Activated CD4-positive, alpha-beta memory T cell treated with anti-CD3 and anti-CD28 coated beads for 36 hours (primary cell): ENCODE measurements at regions of chr16 and their contacts with region 1.

Region 1: GRCh38 chr16:12613131-12613991 is 190.3 kb downstream of the CPPED1 start:
- DNase-seq: peak; percentile 75
- H3K4me3 Mint-ChIP-seq: no peak overlapping the region
- H3K27ac Mint-ChIP-seq: peak overlapping the region; percentile 67
- H3K4me1 Mint-ChIP-seq: peaks cover 38% of the 10 kb centered on the region
- H3K27me3 Mint-ChIP-seq: peaks cover 13% of the 10 kb centered on the region

Region 2: DNA sequence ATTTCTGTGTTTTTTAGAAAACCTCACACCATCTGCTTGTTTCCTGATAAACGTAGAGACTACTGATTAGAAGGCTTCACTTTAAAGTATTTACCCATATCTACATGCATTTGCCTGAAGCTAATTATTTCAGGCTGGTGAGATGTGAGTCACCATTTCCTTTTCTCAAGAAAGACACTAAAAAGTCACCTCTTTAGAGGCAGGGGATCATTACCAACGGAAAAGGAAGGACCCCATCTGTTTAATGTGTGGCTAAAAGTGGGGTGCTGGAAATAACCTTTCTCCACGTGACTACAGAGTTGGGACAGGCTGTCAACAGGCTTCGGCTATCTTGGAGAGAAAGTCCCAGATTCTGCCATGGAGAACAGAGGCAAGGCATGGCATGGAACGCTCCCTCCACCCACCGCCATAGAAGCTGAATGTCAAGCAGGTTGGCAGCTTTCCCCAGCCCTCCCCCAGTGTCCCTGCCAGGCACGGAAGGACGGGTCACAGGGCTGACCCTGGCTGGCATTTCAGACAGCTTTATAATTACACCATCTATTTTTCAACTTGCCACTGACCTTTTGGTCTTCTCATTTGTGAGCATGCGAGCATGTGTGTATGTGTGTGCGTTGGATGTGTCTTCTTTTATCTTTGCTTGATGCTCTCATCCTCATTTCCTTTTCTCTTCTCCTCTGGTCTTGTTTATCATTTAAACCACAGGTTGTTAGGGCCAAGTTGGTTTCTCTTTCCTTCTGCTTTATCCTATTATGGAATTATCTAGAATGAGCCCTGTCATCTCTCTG is 33.3 kb after region 1 on chr16:
- CTCF ChIA-PET with region 1: no interaction called
- POLR2A ChIA-PET with region 1: no interaction called
- intact Hi-C with region 1: loop called (anchors 2 kb)
- DNase-seq: peak; percentile 44
- H3K4me3 Mint-ChIP-seq: peak overlapping the region; percentile 42
- H3K27ac Mint-ChIP-seq: peak overlapping the region; percentile 75
- H3K4me1 Mint-ChIP-seq: peaks cover 16% of the 10 kb centered on the region
- H3K27me3 Mint-ChIP-seq: peaks cover 1% of the 10 kb centered on the region

Region 3: GRCh38 chr16:12661656-12662172 is 48.4 kb after region 1 on chr16:
- CTCF ChIA-PET with region 1: no interaction called
- POLR2A ChIA-PET with region 1: no interaction called
- intact Hi-C with region 1: no loop called
- DNase-seq: peak; percentile 23
- H3K4me3 Mint-ChIP-seq: no peak overlapping the region
- H3K27ac Mint-ChIP-seq: no peak overlapping the region
- H3K4me1 Mint-ChIP-seq: no peaks in the 10 kb centered on the region
- H3K27me3 Mint-ChIP-seq: no peaks in the 10 kb centered on the region